HEK293 (cell line): ENCODE measurements at regions of chr22 and their contacts with region 1.

Region 1: DNA sequence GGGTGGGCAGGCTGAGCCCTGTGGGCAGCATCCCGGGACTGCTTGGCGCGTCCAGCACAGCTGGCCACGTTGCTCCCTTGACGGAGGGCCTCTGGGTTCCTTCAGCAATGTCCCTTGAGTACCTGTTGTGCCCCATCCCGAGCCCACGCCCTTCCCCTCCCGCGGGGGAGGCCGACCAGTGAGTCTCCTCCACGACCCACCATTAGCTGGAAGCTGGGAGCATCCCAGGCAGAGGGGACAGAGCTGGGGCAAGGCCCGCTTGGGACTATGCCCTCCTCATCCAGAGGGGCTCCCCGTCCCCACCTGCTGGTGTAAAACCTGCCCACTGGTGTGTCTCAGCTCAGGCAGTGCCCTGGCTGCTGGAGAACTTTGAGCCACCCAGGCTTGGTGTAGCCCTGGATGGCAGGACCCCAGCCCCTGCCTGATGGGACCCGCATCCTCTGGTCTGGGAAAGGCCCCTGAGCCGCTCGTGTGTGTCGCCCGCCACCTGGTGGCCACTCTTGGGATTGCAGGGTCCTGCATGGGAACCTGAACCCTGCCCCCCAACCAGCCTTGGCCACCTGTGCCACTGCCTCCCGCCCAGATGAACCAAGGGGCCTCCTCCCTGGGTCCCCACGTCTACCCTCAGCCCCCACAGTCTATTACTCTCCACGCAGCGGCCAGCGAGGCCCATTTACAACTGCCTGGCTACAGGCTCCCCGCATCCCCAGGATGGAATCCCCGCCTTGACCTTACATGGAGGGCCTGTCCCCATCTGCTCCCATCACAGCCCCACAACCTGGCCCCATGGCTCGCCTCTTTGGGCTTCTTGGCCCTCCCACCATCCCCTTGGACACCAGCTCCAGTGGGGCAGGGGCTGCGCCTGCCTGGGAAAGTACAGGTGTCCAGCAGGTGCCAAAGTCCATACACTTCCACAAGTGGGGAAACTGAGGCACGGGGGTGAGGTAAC is 16.6 kb upstream of the ARHGAP8 start:
- H3K4me3 ChIP-seq: no peak overlapping the region
- H3K27ac ChIP-seq: no peak overlapping the region
- H3K4me1 ChIP-seq: no peaks in the 10 kb centered on the region
- CTCF ChIP-seq: peak; percentile 97

Region 2: GRCh38 chr22:44684506-44685383 is 51.1 kb before region 1 on chr22:
- CTCF ChIA-PET with region 1: interaction called, 26 read pairs
- POLR2A ChIA-PET with region 1: interaction called, 3 read pairs
- H3K4me3 ChIP-seq: no peak overlapping the region
- H3K27ac ChIP-seq: no peak overlapping the region
- H3K4me1 ChIP-seq: peaks cover 2% of the 10 kb centered on the region; the same call in 1 of the 2 replicates
- CTCF ChIP-seq: peak; percentile 93

Region 3: DNA sequence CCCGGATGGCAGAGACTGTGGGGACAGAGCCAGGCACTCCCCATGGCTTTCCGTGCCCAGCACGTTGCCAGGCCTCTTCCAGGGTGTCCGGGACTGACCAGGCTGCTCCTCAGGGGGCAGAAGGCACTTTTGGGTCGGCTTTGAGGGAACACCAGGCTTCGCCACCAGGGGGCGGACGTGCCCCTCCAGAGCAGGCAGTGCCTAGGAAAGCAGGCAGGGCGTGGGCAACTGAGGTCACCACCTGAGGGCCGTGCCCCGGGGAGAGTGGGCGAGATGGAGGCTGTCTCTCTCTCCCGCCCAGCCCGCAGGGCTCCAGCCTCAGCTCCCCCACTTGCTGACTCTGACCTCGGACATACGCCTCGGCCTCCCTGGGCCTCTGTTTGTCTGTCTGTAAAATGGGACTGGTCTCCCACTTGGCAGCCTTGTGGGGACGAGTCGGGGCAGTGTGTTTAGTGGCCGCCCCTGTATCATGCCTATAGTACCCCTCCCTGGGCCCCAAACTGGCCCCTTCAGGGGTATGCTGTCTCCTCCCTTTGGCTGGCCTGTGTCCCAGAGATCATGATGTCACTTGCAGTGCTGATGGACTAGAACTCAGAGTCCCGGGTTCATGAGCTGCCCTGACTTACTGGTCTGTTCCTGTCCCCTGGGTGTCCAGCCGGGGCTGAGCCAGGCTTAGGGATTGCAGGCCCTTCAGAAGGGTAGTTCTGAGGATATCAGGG is 38.2 kb before region 1 on chr22:
- CTCF ChIA-PET with region 1: interaction called, 70 read pairs
- POLR2A ChIA-PET with region 1: interaction called, 3 read pairs
- H3K4me3 ChIP-seq: no peak overlapping the region
- H3K27ac ChIP-seq: no peak overlapping the region
- H3K4me1 ChIP-seq: no peaks in the 10 kb centered on the region
- CTCF ChIP-seq: peak; percentile 92

Region 4: DNA sequence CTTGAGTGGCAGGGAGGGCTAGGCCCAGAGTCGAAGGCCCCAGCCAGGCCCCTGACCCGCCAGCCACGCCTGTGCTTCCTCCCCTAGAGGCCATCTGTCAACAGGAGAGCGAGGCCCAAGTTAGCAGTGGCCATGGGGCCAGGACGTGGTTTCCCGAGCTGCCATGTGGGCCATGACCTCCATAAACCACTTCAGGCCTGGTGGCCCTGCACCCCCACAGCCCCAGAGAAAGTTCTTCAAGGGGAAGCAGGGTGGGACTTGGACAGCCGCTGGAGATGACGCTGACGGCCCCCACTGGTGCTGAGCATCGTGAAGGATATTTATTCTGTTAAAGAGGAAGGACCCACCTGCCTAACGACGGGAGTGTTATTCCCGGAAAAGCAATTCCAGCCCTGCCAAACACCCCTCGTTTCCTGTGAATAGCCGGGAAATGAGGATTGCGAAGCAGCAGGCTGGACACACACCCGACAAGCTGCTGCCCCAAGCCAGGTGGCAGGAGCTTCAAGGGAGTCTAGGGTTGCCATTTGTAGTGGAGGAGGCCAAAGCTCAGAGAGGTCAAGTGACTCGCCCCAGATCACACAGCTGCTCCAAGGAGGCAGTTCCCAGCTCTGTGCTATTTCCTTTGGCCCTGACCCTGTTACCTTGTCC is 21.0 kb before region 1 on chr22:
- CTCF ChIA-PET with region 1: interaction called, 13 read pairs
- POLR2A ChIA-PET with region 1: no interaction called
- H3K4me3 ChIP-seq: no peak overlapping the region
- H3K27ac ChIP-seq: no peak overlapping the region
- H3K4me1 ChIP-seq: peaks cover 4% of the 10 kb centered on the region; the same call in 1 of the 2 replicates
- CTCF ChIP-seq: no peak

Region 5: GRCh38 chr22:44745853-44746789 is 10.3 kb after region 1 on chr22:
- CTCF ChIA-PET with region 1: interaction called, 11 read pairs
- POLR2A ChIA-PET with region 1: no interaction called
- H3K4me3 ChIP-seq: no peak overlapping the region
- H3K27ac ChIP-seq: no peak overlapping the region
- H3K4me1 ChIP-seq: no peaks in the 10 kb centered on the region
- CTCF ChIP-seq: no peak

Region 6: GRCh38 chr22:44913198-44913983 is 177.6 kb after region 1 on chr22:
- CTCF ChIA-PET with region 1: no interaction called
- POLR2A ChIA-PET with region 1: no interaction called
- H3K4me3 ChIP-seq: no peak overlapping the region
- H3K27ac ChIP-seq: no peak overlapping the region
- H3K4me1 ChIP-seq: no peaks in the 10 kb centered on the region
- CTCF ChIP-seq: no peak